Dorsolateral prefrontal cortex (tissue), 120 donors: ENCODE measurements at regions of chr7 and their contacts with region 1.

Region 1: DNA sequence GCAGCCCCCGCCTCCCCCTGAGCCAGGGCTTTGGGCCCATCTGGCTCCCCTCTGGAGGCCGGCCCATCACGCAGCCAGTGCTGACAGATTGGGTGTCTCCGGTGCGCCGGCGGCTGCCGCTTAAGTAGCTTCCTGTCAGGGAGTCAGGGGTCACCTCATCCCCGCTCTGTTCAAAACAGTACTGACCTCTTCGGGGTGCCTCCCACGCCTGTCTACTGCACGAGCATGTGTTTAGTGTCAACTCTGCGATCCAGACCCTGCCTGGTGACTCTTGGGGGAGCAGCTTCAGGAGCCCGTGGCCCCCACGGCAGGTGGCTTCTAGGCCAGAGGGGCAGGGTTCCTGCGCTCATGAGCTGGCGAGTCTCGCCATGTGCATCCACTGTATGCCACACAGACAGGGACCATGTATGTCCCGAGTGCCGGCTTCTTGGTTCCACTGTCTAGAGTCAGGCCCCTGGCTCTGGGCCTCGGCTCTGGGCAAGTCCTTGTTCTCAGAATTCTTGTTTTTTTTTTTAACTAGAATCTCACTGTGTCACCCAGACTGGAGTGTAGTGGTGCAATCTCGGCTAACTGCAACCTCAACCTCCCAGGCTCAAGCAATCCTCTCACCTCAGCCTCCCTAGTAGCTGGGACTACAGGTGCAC is 36.1 kb downstream of the KCTD7 start:
- DNase-seq: no peak
- H3K4me3 ChIP-seq: no peak overlapping the region
- H3K27ac ChIP-seq: peak overlapping the region in 39 of 59 donors; percentile 1 to 100 (median 56)
- H3K27me3 ChIP-seq: no peaks in the 10 kb centered on the region
- CTCF ChIP-seq: no peak

Region 2: DNA sequence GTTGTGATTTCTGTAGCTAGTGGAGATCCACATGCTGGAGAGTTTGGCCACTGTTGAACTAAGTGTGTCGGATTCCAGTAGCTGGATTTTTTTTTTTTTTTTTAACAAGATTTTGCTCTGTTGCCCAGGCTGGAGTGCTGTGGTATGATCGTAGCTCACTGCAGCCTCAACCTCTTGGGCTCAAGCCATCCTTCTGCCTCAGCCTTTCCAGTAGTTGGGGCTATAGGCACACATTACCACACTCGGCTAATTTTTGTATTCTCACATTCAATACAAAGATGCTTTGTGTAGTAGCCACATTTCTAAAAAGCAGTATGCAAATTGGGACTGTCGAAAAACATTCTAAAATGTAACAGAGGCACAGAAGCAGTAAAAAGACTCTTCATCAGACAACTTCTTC is 139.2 kb after region 1 on chr7:
- intact Hi-C with region 1: loop called in 1 of 2 experiments (anchors 10 kb)
- DNase-seq: peak in 8 of 10 donors; percentile 35 to 71 (median 58)
- H3K4me3 ChIP-seq: peak overlapping the region in 7 of 59 donors; percentile 7 to 33 (median 17)
- H3K27ac ChIP-seq: peak overlapping the region in 49 of 59 donors; percentile 26 to 90 (median 78)
- H3K27me3 ChIP-seq: no peaks in the 10 kb centered on the region
- CTCF ChIP-seq: peak in 52 of 56 donors; percentile 12 to 73 (median 48)

Region 3: DNA sequence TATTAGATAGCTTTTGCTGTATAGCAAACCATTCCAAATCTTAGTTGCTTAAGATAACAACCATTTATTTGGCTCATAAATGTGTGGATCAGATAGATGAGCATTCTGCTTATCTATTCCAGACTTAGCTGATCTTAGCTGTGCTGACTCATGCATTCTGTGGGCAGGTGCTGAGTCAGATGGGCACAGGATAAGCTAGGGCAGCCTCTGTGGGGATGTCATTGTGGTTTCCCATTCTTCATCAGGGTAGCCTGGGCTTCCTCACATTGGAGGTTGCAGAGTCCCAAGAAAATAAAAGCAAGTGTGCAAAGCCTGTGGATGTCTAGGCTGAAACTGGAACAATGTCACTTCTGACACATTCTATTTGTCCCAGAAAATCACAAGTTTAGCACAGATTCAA is 1248.8 kb after region 1 on chr7:
- intact Hi-C with region 1: no loop called
- DNase-seq: peak in 6 of 10 donors; percentile 29 to 57 (median 40)
- H3K4me3 ChIP-seq: no peak overlapping the region
- H3K27ac ChIP-seq: peak overlapping the region in 1 of 59 donors; percentile 16
- H3K27me3 ChIP-seq: no peaks in the 10 kb centered on the region
- CTCF ChIP-seq: no peak